Activated naive CD4-positive, alpha-beta T cell treated with anti-CD3 and anti-CD28 coated beads for 36 hours (primary cell): ENCODE measurements at regions of chr7 and their contacts with region 1.

Region 1: DNA sequence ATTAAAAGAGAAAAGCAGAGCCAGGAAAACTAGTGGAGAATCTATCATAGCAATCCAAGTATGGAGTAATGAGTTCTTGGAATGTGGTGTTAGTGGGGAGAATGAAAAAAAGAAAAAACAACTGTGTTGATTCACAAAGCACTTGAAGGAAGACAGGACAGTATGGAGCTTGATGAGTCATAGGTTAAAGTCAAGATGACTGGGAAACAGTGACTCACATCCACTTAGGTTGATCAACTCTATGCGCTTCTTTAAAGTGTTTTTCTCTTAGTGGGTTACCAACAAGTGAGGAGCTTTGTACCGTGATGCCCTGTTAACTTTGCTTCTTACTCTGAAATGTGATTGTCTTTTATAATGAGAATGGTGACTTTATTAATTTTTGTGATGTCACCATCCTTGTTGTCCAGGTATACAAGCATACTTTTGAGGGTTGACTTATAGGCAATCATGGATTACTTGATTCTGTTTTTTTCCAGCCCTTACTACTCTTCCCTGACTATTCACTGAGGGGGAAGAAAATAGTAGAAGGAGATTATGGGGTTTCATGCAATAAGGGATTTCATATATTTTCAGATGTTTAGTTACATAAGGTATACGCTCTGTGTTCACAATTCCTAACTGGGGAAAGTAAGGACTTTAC is 32.1 kb upstream of the MDFIC start:
- DNase-seq: peak; percentile 35
- H3K4me3 Mint-ChIP-seq: no peak overlapping the region
- H3K27ac Mint-ChIP-seq: peak overlapping the region; percentile 87
- H3K4me1 Mint-ChIP-seq: peaks cover 43% of the 10 kb centered on the region
- H3K27me3 Mint-ChIP-seq: no peaks in the 10 kb centered on the region

Region 2: DNA sequence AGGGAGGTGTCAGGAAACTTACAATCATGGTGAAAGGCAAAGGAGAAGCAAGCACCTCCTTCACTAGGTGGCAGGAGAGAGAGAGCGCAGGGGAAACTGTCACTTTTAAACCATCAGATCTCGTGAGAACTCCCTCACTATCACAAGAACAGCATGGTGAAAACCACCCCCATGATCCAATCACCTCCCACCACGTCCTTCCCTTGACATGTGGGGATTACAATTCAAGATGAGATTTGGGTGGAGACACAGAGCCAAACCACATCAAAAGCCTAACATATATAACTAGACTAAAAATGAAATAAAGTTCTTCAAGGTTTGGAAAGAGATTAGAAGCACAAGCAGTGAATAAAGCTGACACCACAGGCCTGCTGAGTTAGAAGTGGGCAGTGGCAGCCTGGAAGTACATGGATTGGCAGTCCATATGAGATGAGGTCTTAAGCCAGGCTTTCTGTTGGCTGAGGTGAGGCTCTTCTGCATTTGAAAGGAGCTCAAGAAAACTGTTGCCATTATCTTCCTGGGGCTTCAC is 64.3 kb before region 1 on chr7:
- CTCF ChIA-PET with region 1: no interaction called
- intact Hi-C with region 1: loop called (anchors 1 kb)
- DNase-seq: peak; percentile 82
- H3K4me3 Mint-ChIP-seq: peak overlapping the region; percentile 32
- H3K27ac Mint-ChIP-seq: peak overlapping the region; percentile 90
- H3K4me1 Mint-ChIP-seq: peaks cover 33% of the 10 kb centered on the region
- H3K27me3 Mint-ChIP-seq: peaks cover 4% of the 10 kb centered on the region

Region 3: DNA sequence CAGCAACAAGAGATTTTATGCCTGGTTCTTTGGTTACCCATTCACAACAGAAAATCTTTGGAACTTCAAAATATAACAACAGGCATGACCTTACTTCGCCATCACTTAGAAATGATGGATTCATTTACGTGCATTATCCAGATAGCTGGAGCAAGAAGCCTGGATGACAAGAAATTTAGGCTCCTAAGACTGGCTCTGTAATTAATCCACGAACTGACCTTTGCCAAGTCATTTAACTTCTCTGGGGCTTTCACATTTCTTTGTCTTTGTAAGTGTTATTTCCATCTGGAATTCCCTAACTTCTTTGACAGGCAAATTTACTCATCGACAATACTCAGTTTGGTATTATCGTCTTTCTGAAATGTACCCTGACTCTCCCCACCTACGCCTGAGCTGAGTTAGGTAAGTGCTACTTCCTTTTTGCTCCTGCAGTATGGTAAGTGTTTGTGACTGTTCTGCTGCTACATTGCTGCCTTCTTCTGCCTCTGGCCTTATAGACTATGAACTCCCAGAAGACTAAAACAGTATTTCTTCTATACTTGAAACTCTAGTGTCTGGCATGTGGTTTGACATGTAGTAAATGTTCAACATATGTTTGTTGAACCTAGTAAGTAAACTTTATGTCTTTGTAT is 26.6 kb after region 1 on chr7:
- CTCF ChIA-PET with region 1: interaction called, 4 read pairs
- intact Hi-C with region 1: loop called (anchors 1 kb)
- DNase-seq: peak; percentile 81
- H3K4me3 Mint-ChIP-seq: peak overlapping the region; percentile 46
- H3K27ac Mint-ChIP-seq: peak overlapping the region; percentile 94
- H3K4me1 Mint-ChIP-seq: peaks cover 66% of the 10 kb centered on the region
- H3K27me3 Mint-ChIP-seq: no peaks in the 10 kb centered on the region

Region 4: GRCh38 chr7:114922016-114922651 is 32.4 kb after region 1 on chr7 and contains the start of gene MDFIC:
- CTCF ChIA-PET with region 1: interaction called, 5 read pairs
- intact Hi-C with region 1: loop called (anchors 1 kb)
- DNase-seq: peak; percentile 76
- H3K4me3 Mint-ChIP-seq: peak within 1 kb of the TSS; percentile 98
- H3K27ac Mint-ChIP-seq: peak within 1 kb of the TSS; percentile 99
- H3K4me1 Mint-ChIP-seq: peaks cover 63% of the 10 kb centered on the region
- H3K27me3 Mint-ChIP-seq: no peaks in the 10 kb centered on the region
- total RNA-seq, gene MDFIC: 79.4 to 93.1 TPM

Region 5: DNA sequence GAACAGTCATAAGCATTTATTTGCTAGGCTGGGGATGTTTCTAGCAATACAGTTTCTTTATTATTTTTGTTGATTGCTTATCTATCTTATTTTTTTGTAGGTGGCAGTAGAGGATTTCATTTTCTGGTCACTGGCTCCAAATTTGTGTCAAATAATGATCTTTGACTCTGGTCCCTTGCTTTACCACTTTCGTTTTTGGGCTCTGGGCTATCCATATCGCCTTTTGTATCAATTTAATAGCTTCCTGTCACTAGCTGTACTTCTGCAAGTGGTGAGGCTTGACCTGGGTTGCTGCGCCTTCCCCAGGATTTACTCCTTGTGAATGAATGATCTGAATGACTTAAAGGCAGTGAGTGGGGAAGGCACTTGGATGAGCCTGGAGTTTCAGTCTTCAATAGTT is 80.5 kb after region 1 on chr7:
- CTCF ChIA-PET with region 1: no interaction called
- intact Hi-C with region 1: no loop called
- DNase-seq: no peak
- H3K4me3 Mint-ChIP-seq: no peak overlapping the region
- H3K27ac Mint-ChIP-seq: no peak overlapping the region
- H3K4me1 Mint-ChIP-seq: peaks cover 76% of the 10 kb centered on the region
- H3K27me3 Mint-ChIP-seq: no peaks in the 10 kb centered on the region

Region 6: DNA sequence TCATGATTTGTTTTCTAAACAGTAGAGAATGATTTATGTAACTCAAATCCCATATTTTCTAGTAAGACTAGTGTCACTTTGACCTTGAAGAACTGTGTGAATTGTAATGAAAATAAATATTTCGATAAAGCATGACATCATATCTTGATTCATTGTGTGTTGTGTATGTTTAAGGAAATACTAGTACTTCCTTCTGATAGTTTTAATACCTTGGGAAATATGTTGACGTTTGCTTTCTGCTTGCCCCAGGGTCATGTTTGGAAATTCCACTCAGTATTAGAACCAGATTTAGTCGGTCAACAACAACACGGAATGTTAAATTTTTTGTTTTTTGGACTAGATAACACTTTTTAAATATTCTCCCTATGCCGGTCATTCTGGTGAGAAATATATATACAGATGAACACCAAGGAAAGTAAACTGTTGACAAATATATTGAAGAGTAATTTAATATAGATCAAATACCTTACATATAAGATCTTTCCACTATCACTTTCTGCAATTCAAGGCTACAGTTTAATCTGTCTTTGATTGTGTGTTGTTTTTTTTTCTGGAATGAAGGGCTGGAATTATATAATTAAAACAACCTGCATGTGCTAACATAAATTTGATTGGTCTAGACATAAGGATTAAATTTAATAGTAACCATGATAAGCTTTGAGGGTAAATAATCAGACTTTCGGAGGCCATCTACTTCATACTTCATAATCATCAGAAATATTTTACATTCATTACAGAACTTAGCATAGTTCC is 158.4 kb after region 1 on chr7:
- CTCF ChIA-PET with region 1: no interaction called
- intact Hi-C with region 1: no loop called
- DNase-seq: no peak
- H3K4me3 Mint-ChIP-seq: no peak overlapping the region
- H3K27ac Mint-ChIP-seq: no peak overlapping the region
- H3K4me1 Mint-ChIP-seq: peaks cover 8% of the 10 kb centered on the region
- H3K27me3 Mint-ChIP-seq: no peaks in the 10 kb centered on the region

Region 7: DNA sequence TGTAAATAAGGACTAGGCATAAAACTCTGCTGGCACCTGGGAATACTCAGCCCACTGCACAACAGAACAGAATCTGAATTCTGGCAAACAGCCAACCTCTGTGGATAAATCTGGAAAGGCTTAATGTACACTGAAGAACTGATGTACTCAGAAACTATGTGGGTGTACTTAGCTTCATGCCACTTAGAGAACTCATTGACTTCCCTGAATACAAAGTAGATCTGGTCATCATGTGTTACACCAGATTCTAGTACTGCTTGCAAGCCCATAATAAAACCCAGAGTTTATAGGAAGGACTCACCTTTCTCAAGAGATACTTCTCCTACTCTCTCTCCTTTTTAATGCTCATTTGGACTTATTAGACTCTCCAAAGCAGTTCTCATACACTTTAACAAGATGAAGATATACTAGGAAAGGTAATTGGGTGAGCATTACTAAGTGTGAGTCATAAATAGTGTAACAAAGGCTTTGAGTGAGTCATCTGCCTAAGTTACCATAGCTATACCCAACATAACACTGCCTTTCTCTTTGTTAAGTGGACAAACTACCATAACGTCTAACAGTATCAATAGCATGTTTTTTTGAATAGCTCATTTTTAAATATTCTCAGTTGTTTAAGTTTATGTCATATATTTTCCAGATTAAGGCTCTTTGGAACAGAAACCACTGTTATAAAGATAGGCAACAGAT is 341.3 kb after region 1 on chr7:
- CTCF ChIA-PET with region 1: no interaction called
- intact Hi-C with region 1: loop called (anchors 1 kb)
- DNase-seq: no peak
- H3K4me3 Mint-ChIP-seq: no peak overlapping the region
- H3K27ac Mint-ChIP-seq: peak overlapping the region; percentile 19
- H3K4me1 Mint-ChIP-seq: peaks cover 18% of the 10 kb centered on the region
- H3K27me3 Mint-ChIP-seq: peaks cover 6% of the 10 kb centered on the region